Activated T-helper 2 cell treated with anti-CD3 and anti-CD28 coated beads, Interferon-gamma antibody, Interleukin-2, Interleukin-4, amounts not matched to agents 10 μg/mL and 5 μg/mL and 100 μg/mL, durations not matched to agents 14 hours and 24 hours and 36 hours (primary cell): ENCODE measurements at regions of chr4 and their contacts with region 1.

Region 1: GRCh38 chr4:15655229-15656037 is at the start of gene FBXL5:
- DNase-seq: peak; percentile 81
- H3K4me3 Mint-ChIP-seq: peak within 1 kb of the TSS; percentile 93
- H3K27ac Mint-ChIP-seq: peak within 1 kb of the TSS; percentile 96
- H3K4me1 Mint-ChIP-seq: peaks cover 51% of the 10 kb centered on the region
- H3K27me3 Mint-ChIP-seq: no peaks in the 10 kb centered on the region
- total RNA-seq, gene FBXL5: 28.9 and 30.3 TPM in 2 replicates

Region 2: DNA sequence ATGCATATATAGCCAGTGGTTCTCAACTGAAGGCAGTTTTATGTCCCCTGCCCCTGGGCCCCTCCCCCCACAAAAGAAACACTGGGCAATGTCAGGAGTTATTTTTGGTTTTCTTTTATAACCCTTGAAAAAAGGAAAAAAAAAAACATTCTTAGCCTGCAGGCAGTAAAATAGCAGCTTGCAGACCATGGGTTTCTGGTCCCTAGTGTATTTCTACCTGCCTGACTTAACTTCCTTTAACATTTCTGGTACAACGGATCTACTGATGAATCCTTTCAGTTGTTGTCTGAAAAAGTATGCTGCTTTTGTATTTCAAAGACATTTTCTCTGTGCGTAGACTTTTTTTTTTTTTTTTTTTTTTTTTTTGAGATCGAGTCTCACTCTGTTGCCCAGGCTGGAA is 15.1 kb after region 1 on chr4:
- intact Hi-C with region 1: no loop called
- DNase-seq: no peak
- H3K4me3 Mint-ChIP-seq: no peak overlapping the region
- H3K27ac Mint-ChIP-seq: no peak overlapping the region
- H3K4me1 Mint-ChIP-seq: peaks cover 30% of the 10 kb centered on the region
- H3K27me3 Mint-ChIP-seq: no peaks in the 10 kb centered on the region

Region 3: GRCh38 chr4:15681207-15682015 is 26.0 kb after region 1 on chr4 and contains the start of gene FAM200B:
- intact Hi-C with region 1: loop called (anchors 1 kb)
- DNase-seq: peak; percentile 97
- H3K4me3 Mint-ChIP-seq: peak within 1 kb of the TSS; percentile 99
- H3K27ac Mint-ChIP-seq: peak within 1 kb of the TSS; percentile 94
- H3K4me1 Mint-ChIP-seq: peaks cover 34% of the 10 kb centered on the region
- H3K27me3 Mint-ChIP-seq: no peaks in the 10 kb centered on the region
- total RNA-seq, gene FAM200B: 5.6 and 6.8 TPM in 2 replicates

Region 4: DNA sequence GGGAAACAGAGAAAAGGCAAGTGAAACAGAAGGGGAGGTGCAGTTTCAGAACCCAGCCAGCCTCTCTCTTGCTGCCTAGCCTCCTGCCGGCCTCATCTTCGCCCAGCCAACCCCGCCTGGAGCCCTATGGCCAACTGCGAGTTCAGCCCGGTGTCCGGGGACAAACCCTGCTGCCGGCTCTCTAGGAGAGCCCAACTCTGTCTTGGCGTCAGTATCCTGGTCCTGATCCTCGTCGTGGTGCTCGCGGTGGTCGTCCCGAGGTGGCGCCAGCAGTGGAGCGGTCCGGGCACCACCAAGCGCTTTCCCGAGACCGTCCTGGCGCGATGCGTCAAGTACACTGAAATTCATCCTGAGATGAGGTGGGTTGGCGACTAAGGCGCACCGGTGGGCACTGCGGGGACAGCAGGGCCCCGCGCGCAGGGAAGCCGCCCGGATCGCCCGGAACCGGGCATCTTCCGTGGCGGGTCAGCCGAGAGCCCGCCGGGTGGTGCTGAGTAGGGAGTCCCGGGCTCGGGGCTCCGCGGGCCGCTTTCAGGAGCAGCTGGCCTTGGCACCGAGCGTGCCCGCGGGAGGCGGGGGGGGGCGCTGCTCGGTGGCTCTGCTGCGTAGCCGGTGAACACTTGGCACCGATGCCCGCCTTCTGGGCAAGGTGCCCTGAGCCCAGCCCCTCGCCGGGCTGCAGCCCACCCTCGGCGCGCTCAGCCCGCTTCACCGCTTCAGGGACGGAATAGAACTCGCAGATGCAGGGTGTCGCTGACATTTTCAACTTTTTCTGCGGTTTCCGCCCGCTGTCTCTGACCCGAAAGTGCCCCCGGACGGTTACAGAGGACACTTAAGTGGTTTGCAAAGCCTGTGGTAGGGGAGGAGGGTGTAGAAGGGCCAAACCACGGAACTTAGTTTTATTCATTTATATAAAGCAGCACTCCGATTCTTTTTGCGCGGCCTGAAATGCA is 123.1 kb after region 1 on chr4 and contains the start of gene CD38:
- intact Hi-C with region 1: loop called (anchors 2 kb)
- DNase-seq: peak; percentile 65
- H3K4me3 Mint-ChIP-seq: peak within 1 kb of the TSS; percentile 93
- H3K27ac Mint-ChIP-seq: peak within 1 kb of the TSS; percentile 91
- H3K4me1 Mint-ChIP-seq: peaks cover 69% of the 10 kb centered on the region
- H3K27me3 Mint-ChIP-seq: no peaks in the 10 kb centered on the region
- total RNA-seq, gene CD38: 75.3 and 87.1 TPM in 2 replicates

Region 5: DNA sequence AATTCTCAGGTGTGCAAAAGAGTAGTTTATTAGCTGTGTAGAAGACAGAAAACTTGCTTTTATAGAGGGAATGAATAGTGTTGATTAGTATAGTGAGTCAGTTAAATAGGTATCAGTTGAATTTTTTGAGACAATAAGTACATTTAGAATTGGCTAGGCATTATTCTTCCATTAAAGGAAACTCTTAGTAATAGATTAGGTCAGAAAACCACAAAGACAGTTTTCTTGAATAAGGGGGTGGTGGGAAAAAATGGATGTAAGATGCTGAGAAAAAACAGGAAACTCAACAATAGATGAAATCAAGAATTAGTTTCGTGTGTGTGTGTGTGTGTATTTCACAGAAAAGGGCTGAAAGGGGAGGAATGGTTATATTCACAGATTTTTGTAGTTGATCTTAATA is 139.5 kb after region 1 on chr4:
- intact Hi-C with region 1: loop called (anchors 5 kb)
- DNase-seq: no peak
- H3K4me3 Mint-ChIP-seq: peak overlapping the region; percentile 39
- H3K27ac Mint-ChIP-seq: peak overlapping the region; percentile 89
- H3K4me1 Mint-ChIP-seq: peaks cover 61% of the 10 kb centered on the region
- H3K27me3 Mint-ChIP-seq: no peaks in the 10 kb centered on the region

Region 6: DNA sequence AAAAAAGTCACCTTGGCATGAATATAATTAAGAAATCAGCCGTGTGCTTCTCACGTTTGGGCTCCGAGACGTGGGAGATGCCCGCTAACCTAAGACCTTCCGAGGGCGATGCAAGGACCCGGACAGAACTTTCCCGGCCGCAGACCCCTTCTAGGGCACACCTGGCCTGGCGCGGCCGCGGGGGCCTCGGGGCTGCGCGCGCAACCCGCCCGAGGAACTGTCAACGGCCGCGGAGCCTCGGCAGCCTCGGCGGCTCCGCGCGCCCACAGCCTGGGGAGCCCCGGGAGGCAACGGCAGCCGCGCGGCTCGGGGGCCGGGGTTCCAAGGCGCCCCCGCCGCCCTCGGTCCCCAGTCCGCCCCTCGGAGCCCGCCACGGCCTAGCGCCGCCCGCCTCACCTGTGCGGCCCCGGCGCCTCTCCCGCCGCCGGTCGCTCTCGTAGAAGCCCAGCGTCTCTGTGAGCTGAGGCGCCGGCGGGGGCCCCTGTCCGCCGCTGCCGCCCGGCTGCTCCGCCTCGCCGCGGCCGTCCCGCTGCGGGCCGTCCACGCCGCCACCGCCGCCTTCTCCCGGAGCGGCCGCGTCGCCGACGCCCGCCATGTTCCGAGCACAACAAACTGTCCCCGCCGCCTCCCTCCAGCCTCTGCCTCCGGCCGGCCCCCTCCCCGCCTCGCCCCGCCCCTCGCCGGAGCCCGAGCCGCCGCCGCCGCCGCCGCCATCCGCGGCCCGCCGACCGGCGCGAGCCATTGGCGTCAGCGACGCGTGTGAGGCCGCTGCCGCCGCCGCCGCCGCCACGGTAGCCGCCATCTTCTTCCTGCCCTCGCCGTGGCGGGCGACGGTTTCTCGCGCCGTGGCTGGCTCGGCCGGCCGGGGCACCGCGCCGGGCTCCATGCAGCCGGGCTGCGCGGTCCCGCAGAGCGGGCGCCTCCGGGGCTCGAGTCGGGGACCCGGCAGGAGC is 570.7 kb after region 1 on chr4 and contains the start of gene TAPT1:
- intact Hi-C with region 1: loop called (anchors 10 kb)
- DNase-seq: peak; percentile 74
- H3K4me3 Mint-ChIP-seq: peak within 1 kb of the TSS; percentile 95
- H3K27ac Mint-ChIP-seq: peak within 1 kb of the TSS; percentile 98
- H3K4me1 Mint-ChIP-seq: peaks cover 48% of the 10 kb centered on the region
- H3K27me3 Mint-ChIP-seq: no peaks in the 10 kb centered on the region
- total RNA-seq, gene TAPT1: 28.1 and 32.9 TPM in 2 replicates

Region 7: GRCh38 chr4:17251101-17251500 is 1595.7 kb after region 1 on chr4:
- intact Hi-C with region 1: no loop called
- DNase-seq: no peak
- H3K4me3 Mint-ChIP-seq: no peak overlapping the region
- H3K27ac Mint-ChIP-seq: no peak overlapping the region
- H3K4me1 Mint-ChIP-seq: no peaks in the 10 kb centered on the region
- H3K27me3 Mint-ChIP-seq: peaks cover 5% of the 10 kb centered on the region